ENCODE measurements at regions of chr5 and their contacts with region 1.

Region 1: DNA sequence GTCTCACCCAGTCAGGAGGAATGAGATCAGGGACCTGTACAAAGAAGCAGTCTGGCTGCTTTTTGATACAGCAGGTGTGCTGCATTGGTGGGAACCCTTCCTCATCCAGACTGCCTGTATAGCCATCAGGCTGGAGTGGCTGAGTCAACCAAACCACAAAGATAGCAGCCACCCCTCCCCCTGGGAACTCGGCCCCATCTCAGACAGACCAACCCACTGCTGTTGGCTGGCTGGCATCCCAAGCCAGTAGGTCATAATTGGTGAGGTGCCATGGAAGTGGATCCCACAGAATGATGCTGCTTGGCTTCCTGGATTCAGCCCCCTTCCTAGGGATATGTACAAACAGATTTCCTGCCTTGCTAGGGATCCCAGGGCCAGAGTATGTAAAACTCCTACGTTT is 60.9 kb downstream of the YTHDC2 start:
- DNase-seq: no peak
- H3K4me3 ChIP-seq: no peak overlapping the region
- H3K27ac ChIP-seq: no peak overlapping the region
- H3K4me1 ChIP-seq: no peaks in the 10 kb centered on the region
- H3K27me3 ChIP-seq: no peaks in the 10 kb centered on the region
- CTCF ChIP-seq: no peak
- EP300 ChIP-seq: no peak
- POLR2A ChIP-seq: no peak

Region 2: DNA sequence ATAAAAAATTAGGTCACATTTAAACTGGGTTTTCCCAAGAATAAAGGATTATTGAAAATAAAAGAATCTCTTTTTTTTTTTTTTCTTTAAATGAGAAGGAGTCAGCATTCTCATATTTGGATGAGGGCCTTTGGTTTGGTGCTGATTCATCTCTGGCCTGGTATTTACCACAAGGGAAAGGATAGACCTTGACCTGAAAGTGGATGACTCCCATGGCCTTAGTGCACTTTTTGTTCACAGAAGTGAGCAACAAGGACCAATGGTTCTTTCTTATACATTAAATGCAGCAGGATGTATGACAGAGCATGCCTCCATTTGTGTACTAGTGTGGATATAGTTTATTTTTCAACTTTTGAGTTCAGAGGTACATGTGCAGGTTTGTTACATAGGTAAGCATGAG is 54.0 kb before region 1 on chr5:
- in situ Hi-C with region 1: no loop called
- intact Hi-C with region 1: no loop called
- DNase-seq: no peak
- H3K4me3 ChIP-seq: no peak overlapping the region
- H3K27ac ChIP-seq: no peak overlapping the region
- H3K4me1 ChIP-seq: peaks cover 0 to 10% (median under 1%) of the 10 kb centered on the region in 4 donors
- H3K27me3 ChIP-seq: no peaks in the 10 kb centered on the region
- CTCF ChIP-seq: no peak
- EP300 ChIP-seq: no peak
- POLR2A ChIP-seq: no peak

Region 3: DNA sequence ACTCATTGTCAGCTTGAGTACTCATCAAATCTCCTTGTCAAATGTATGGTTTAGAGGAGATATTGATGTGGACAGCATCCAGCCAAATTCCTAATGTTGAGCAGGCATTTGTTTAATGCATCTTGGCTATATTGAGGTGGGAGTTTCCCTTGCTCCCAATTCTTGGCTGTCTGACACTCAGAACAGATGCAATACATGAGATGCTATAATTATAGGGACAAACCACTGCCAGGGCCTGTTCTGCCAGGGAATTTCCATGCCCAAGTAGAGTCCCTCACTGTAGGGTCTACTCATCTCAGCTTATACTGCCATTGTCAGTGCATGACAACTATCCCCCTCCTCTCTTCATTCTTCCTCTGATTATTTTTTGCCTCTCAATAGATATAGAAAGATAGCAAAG is 395.5 kb after region 1 on chr5:
- in situ Hi-C with region 1: no loop called
- intact Hi-C with region 1: no loop called
- DNase-seq: no peak
- H3K4me3 ChIP-seq: no peak overlapping the region
- H3K27ac ChIP-seq: no peak overlapping the region
- H3K4me1 ChIP-seq: peaks cover 0 to 5% (median 2%) of the 10 kb centered on the region in 4 donors
- H3K27me3 ChIP-seq: peaks cover 3% of the 10 kb centered on the region
- CTCF ChIP-seq: no peak
- EP300 ChIP-seq: no peak
- POLR2A ChIP-seq: no peak

Region 4: GRCh38 chr5:114953565-114953964 is 1379.1 kb after region 1 on chr5:
- in situ Hi-C with region 1: no loop called
- intact Hi-C with region 1: loop called (anchors 5 kb)
- DNase-seq: no peak
- H3K4me3 ChIP-seq: no peak overlapping the region
- H3K27ac ChIP-seq: no peak overlapping the region
- H3K4me1 ChIP-seq: no peaks in the 10 kb centered on the region
- H3K27me3 ChIP-seq: no peaks in the 10 kb centered on the region
- CTCF ChIP-seq: no peak
- EP300 ChIP-seq: no peak
- POLR2A ChIP-seq: no peak

Measured in transverse colon (tissue), 4 donors.